ENCODE measurements at regions of chr9 and their contacts with region 1.

Region 1: DNA sequence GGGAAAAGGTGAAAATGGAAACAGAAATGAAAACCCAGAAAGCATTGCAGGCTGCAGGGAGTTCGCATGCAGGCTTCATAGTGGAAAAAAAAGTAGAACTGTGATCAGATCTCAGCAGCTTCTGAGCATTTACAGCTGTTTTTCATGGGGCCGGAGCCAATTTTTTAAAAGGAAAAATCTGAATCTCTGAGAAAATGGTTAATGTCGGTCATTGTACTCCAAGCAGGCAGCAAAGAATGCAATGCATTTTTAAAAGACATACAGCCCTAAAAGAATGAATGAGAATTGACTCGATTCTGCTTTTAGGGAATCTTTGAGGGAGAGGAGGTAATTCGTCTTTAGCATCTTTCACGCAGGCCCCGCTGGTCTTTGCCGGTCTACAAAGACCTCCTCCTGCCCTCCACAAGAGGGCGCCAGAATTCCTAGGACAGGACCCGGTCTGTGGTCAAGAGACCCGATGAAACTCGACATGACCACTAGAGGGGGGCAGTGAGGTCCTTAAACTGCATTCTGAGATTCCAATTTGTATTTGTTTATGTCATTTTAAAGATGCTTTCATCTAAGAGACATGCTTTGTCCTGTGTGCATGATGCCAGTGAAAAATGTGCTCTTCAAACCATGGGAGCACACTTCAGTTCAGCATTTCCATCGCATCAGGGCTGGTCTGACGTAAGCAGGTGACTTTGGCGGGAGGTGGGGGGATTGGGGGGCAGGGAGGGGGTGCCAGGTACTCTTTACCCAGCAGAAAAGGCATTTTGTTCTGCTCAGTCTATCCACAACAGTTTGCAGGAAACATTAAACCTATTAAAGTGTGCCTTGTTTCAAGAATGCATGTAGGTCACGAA is 43.7 kb upstream of the TMEM252 start:
- DNase-seq: peak; percentile 88 to 95 (median 92)
- H3K4me3 ChIP-seq: no peak overlapping the region
- H3K27ac ChIP-seq: no peak overlapping the region
- H3K4me1 ChIP-seq: no peaks in the 10 kb centered on the region
- H3K27me3 ChIP-seq: no peaks in the 10 kb centered on the region
- CTCF ChIP-seq: peak; percentile 98 to 99 (median 99)
- POLR2A ChIP-seq: no peak

Region 2: DNA sequence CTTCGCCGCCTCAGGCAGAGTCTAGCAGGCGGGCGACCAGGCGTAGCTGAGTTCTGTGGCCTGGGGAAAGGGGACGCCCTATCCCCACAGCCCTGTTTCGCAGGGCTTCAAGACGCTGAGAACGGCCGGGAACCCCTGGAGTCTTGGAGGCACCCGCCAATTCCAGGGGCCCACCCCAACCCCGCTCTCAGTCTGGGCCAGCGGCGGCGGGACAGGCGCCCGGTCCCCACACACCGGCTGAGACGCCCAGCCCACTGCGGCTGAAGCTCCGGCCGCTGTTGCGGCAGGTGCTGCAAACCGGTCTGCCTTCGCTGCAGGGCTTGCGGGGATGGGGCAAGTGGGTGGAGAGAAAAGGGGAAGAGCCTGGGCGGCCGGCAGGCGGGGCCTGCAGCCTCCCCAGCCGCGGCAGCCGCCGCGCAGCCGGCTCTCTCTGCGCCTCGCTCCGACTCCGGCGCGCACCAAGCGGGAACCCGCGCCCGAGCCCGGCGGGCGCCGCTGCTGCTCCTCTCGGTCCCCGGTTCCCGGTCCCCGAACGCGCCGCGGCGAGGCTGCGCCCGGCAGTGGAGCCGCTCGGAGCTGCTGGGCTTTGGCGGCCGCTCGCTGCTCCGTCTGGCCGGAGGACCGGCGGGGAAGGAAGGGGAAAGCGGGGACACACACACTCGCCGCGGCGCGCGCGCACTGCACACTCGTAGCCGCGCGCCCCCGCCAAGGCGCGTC is 120.6 kb after region 1 on chr9 and contains the start of gene PIP5K1B:
- intact Hi-C with region 1: loop called in 1 of 2 experiments (anchors 10 kb)
- DNase-seq: peak; percentile 78 to 88 (median 83)
- H3K4me3 ChIP-seq: peak within 1 kb of the TSS; percentile 16 to 94 (median 37)
- H3K27ac ChIP-seq: peak within 1 kb of the TSS in 4 of 5 donors; percentile 52 to 93 (median 85)
- H3K4me1 ChIP-seq: peaks cover 9 to 11% of the 10 kb centered on the region in 2 donors
- H3K27me3 ChIP-seq: no peaks in the 10 kb centered on the region
- CTCF ChIP-seq: peak in 2 of 6 experiments; percentile 13 to 35
- POLR2A ChIP-seq: peak; percentile 58 to 95
- total RNA-seq, gene PIP5K1B: 4.9 to 24.0 (median 10.0) TPM

Region 3: GRCh38 chr9:68717552-68718443 is 133.4 kb after region 1 on chr9:
- intact Hi-C with region 1: no loop called
- DNase-seq: no peak
- H3K4me3 ChIP-seq: no peak overlapping the region
- H3K27ac ChIP-seq: no peak overlapping the region
- H3K4me1 ChIP-seq: no peaks in the 10 kb centered on the region
- H3K27me3 ChIP-seq: no peaks in the 10 kb centered on the region
- CTCF ChIP-seq: no peak
- POLR2A ChIP-seq: no peak

Region 4: DNA sequence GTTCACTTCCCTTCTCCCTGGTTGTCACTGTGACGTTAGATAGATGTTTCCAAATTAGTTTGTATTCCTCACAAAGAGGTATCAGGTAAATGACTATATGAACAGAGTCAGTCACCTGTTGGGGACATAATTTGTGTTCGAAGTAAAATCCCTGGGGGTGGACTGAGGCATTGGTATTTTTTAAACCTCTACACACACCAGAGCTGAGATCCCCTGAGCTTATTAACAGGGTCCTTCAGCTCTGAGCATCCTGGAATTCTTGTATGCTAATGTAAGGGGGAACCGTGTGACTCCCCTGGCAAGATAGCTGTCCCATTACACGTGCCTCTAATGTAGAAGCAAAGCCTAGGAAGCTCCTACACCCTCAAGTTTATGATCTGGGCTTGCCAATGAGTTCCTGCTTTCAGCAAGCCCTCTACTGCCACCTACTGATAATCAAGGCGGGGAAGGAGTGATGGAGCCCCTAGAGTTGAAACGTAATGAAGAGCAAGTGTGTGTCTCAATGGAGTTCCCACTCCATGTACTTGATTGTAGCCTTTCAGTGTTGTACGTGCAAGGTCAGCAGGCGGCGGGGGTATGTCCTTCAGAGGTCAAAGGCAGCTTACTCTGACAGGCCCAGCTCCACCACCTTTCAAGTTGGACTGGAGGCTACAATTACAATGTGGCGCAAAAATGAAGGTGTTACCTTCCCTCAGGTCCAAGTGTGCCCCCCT is 415.1 kb after region 1 on chr9:
- intact Hi-C with region 1: loop called in 1 of 2 experiments (anchors 2 kb)
- DNase-seq: peak; percentile 72 to 90 (median 80)
- H3K4me3 ChIP-seq: no peak overlapping the region
- H3K27ac ChIP-seq: no peak overlapping the region
- H3K4me1 ChIP-seq: no peaks in the 10 kb centered on the region
- H3K27me3 ChIP-seq: no peaks in the 10 kb centered on the region
- CTCF ChIP-seq: peak; percentile 74 to 87 (median 82)
- POLR2A ChIP-seq: no peak

Region 5: DNA sequence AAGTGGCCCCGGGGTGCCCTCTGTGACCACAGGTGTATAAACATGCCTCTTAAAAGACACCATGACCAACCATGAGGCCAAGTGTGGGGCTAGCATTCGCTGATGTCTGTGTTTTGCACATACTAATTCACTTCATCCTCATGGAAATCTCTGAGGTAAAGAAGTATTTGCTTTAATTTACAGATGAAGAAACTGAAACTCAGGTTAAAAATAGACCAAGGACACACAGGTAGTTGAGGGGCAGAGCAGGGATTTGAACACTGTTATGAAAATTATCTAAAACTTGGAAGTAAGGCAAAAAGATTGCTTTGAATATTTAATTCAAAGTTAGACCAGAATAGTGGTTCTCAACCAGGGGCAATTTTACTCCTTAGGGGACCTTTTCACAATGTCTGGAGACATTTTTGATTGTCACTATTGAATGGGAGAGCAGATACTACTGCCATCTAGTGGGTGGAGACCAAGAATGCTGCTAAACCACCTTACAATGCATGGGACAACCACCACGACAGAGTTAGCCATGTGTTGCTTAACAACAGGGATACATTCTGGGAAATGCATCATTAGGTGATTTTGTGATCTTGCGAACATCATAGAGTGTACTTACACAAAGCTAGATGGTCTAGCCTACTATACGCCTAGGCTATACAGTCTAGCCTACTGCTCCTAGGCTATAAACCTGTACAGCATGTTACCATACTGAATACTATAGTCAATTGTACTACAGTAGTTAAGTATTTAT is 443.1 kb after region 1 on chr9:
- intact Hi-C with region 1: loop called in 1 of 2 experiments (anchors 10 kb)
- DNase-seq: peak in 5 of 7 donors; percentile 30 to 65 (median 41)
- H3K4me3 ChIP-seq: no peak overlapping the region
- H3K27ac ChIP-seq: no peak overlapping the region
- H3K4me1 ChIP-seq: peaks cover 0 to 5% of the 10 kb centered on the region in 2 donors
- H3K27me3 ChIP-seq: no peaks in the 10 kb centered on the region
- CTCF ChIP-seq: peak; percentile 58 to 76 (median 64)
- POLR2A ChIP-seq: no peak

Measured in adrenal gland (tissue), 19 donors.